Heart left ventricle (tissue), 16 donors: ENCODE measurements at regions of chr22 and their contacts with region 1.

Region 1: DNA sequence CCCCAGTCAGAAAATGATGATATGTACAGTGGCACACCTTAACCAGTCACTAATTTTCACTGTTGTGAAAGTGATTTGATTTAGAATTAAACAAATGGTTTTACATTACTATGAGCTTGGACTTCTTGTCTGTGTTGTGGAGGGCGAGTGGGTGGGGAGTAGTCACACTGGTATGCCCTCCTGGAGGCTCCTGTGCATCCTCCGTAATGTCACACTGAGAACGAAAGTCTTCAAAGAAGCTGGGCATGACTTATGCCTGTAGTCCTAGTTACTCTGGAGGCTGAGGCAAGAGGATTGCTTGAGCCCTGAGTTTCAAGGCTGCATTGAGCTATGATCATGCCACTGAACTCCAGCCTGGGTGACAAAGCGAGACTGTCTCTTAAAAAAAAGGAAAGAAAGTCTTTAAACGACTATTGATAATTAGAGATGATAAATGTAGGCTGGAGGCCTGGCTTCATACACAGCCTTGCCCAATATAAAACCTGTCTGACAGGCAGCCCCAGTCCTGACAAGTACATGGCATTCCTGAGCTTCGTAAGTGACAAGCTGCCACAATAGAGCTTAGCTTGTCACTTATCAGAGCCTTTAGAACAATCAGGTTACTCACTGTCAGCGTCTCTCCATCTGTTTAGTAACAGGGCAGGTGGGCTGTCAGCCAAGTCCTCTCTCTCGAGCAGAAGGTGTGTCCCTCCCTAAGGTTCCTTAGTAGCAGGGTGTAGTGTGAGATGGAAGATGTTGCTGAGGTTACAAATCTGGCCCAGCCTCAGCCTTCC is 5.0 kb upstream of the LIMK2 start:
- DNase-seq: peak in 4 of 5 donors; percentile 49 to 80 (median 70)
- ATAC-seq: peak; percentile 6 to 58 (median 30)
- H3K4me3 ChIP-seq: no peak overlapping the region
- H3K27ac ChIP-seq: peak overlapping the region in 9 of 12 donors; percentile 5 to 68 (median 43)
- H3K4me1 ChIP-seq: peaks cover 0 to 37% (median 24%) of the 10 kb centered on the region in 12 donors
- H3K27me3 ChIP-seq: no peaks in the 10 kb centered on the region
- CTCF ChIP-seq: no peak
- POLR2A ChIP-seq: no peak

Region 2: GRCh38 chr22:31139866-31140716 is 67.0 kb before region 1 on chr22 and contains the start of gene PLA2G3:
- intact Hi-C with region 1: no loop called
- DNase-seq: peak in 1 of 5 donors; percentile 55
- ATAC-seq: peak in 3 of 4 donors; percentile 13 to 42 (median 14)
- H3K4me3 ChIP-seq: no peak within 1 kb of the TSS
- H3K27ac ChIP-seq: no peak within 1 kb of the TSS
- H3K4me1 ChIP-seq: peaks cover 0 to 10% (median 0%) of the 10 kb centered on the region in 12 donors
- H3K27me3 ChIP-seq: peaks cover 0 to 8% (median 0%) of the 10 kb centered on the region in 9 donors
- CTCF ChIP-seq: no peak
- POLR2A ChIP-seq: no peak
- total RNA-seq, gene PLA2G3: not detected

Region 3: GRCh38 chr22:31253949-31254348 is 46.9 kb after region 1 on chr22:
- intact Hi-C with region 1: loop called in 2 of 10 experiments (anchors 5 to 10 kb)
- DNase-seq: peak in 4 of 5 donors; percentile 43 to 52 (median 48)
- ATAC-seq: peak; percentile 52 to 83 (median 68)
- H3K4me3 ChIP-seq: no peak overlapping the region
- H3K27ac ChIP-seq: peak overlapping the region in 9 of 12 donors; percentile 5 to 69 (median 46)
- H3K4me1 ChIP-seq: peaks cover 7 to 58% (median 33%) of the 10 kb centered on the region in 12 donors
- H3K27me3 ChIP-seq: no peaks in the 10 kb centered on the region
- CTCF ChIP-seq: peak in 5 of 12 donors; percentile 7 to 41 (median 25)
- POLR2A ChIP-seq: no peak

Region 4: GRCh38 chr22:31272522-31273446 is 65.7 kb after region 1 on chr22:
- intact Hi-C with region 1: loop called in 7 of 10 experiments (anchors 2 to 10 kb)
- DNase-seq: peak in 2 of 5 donors; percentile 44 to 54
- ATAC-seq: peak; percentile 56 to 78 (median 75)
- H3K4me3 ChIP-seq: no peak overlapping the region
- H3K27ac ChIP-seq: no peak overlapping the region
- H3K4me1 ChIP-seq: peaks cover 0 to 17% (median 4%) of the 10 kb centered on the region in 12 donors
- H3K27me3 ChIP-seq: no peaks in the 10 kb centered on the region
- CTCF ChIP-seq: peak; percentile 63 to 81 (median 70)
- POLR2A ChIP-seq: no peak